B cell (primary cell): ENCODE measurements at regions of chr1 and their contacts with region 1.

Region 1: GRCh38 chr1:39653546-39654031 is 14.1 kb upstream of the HEYL start:
- DNase-seq: peak; percentile 77
- ATAC-seq: peak; percentile 45
- H3K4me3 ChIP-seq: no peak overlapping the region
- H3K4me3 Mint-ChIP-seq: no peak overlapping the region
- H3K27ac ChIP-seq: no peak overlapping the region
- H3K27ac Mint-ChIP-seq: no peak overlapping the region
- H3K4me1 ChIP-seq: peaks cover 4 to 8% of the 10 kb centered on the region in 2 donors
- H3K4me1 Mint-ChIP-seq: peaks cover 4% of the 10 kb centered on the region
- H3K27me3 ChIP-seq: peaks cover 0 to 8% (median 6%) of the 10 kb centered on the region in 4 experiments
- H3K27me3 Mint-ChIP-seq: peaks cover 14% of the 10 kb centered on the region
- CTCF ChIP-seq: peak; percentile 91

Region 2: GRCh38 chr1:39672551-39672947 is 19.0 kb after region 1 on chr1:
- CTCF ChIA-PET with region 1: interaction called, 113 read pairs
- POLR2A ChIA-PET with region 1: no interaction called
- intact Hi-C with region 1: no loop called
- DNase-seq: peak; percentile 49
- ATAC-seq: no peak
- H3K4me3 ChIP-seq: peak overlapping the region in 2 of 5 experiments; percentile 8 to 35
- H3K4me3 Mint-ChIP-seq: peak overlapping the region; percentile 59
- H3K27ac ChIP-seq: no peak overlapping the region
- H3K27ac Mint-ChIP-seq: no peak overlapping the region
- H3K4me1 ChIP-seq: peaks cover 12 to 20% of the 10 kb centered on the region in 2 donors
- H3K4me1 Mint-ChIP-seq: peaks cover 5% of the 10 kb centered on the region
- H3K27me3 ChIP-seq: peaks cover 0 to 42% (median 20%) of the 10 kb centered on the region in 4 experiments
- H3K27me3 Mint-ChIP-seq: peaks cover 48% of the 10 kb centered on the region
- CTCF ChIP-seq: peak; percentile 21

Region 3: GRCh38 chr1:39680751-39681150 is 27.2 kb after region 1 on chr1:
- CTCF ChIA-PET with region 1: interaction called, 113 read pairs
- POLR2A ChIA-PET with region 1: no interaction called
- intact Hi-C with region 1: no loop called
- DNase-seq: no peak
- ATAC-seq: no peak
- H3K4me3 ChIP-seq: no peak overlapping the region
- H3K4me3 Mint-ChIP-seq: no peak overlapping the region
- H3K27ac ChIP-seq: no peak overlapping the region
- H3K27ac Mint-ChIP-seq: no peak overlapping the region
- H3K4me1 ChIP-seq: peaks cover 0 to 4% of the 10 kb centered on the region in 2 donors
- H3K4me1 Mint-ChIP-seq: peaks cover 2% of the 10 kb centered on the region
- H3K27me3 ChIP-seq: peaks cover 0 to 37% (median 15%) of the 10 kb centered on the region in 4 experiments
- H3K27me3 Mint-ChIP-seq: peaks cover 41% of the 10 kb centered on the region
- CTCF ChIP-seq: no peak

Region 4: GRCh38 chr1:39720094-39720999 is 66.8 kb after region 1 on chr1:
- CTCF ChIA-PET with region 1: interaction called, 4 read pairs
- POLR2A ChIA-PET with region 1: no interaction called
- intact Hi-C with region 1: loop called (anchors 2 kb)
- DNase-seq: peak; percentile 76
- ATAC-seq: peak; percentile 65
- H3K4me3 ChIP-seq: no peak overlapping the region
- H3K4me3 Mint-ChIP-seq: no peak overlapping the region
- H3K27ac ChIP-seq: no peak overlapping the region
- H3K27ac Mint-ChIP-seq: no peak overlapping the region
- H3K4me1 ChIP-seq: no peaks in the 10 kb centered on the region
- H3K4me1 Mint-ChIP-seq: no peaks in the 10 kb centered on the region
- H3K27me3 ChIP-seq: peaks cover 0 to 13% (median 8%) of the 10 kb centered on the region in 4 experiments
- H3K27me3 Mint-ChIP-seq: peaks cover 39% of the 10 kb centered on the region
- CTCF ChIP-seq: peak; percentile 90